Panc1 (cell line): ENCODE measurements at regions of chr3 and their contacts with region 1.

Region 1: DNA sequence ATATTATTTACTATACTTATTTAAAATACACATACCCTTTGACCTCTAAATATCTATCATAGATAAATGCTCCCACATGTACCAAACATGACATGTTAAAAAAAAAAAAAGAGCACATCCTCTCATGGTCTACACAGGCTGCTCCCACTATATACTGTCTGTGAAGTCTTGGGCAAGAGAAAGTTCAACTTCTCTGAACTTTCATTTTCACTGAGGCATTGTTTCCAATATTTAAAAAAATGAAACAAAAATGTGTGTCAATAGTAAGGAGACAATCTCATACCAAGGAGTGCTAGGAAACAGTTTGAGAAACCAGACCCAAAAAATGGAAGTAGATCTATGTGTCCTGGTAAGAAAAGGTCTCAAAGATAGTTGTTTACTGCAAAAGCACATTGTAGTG is 29.3 kb downstream of the SLC4A7 start:
- DNase-seq: no peak
- ATAC-seq: no peak
- H3K4me3 ChIP-seq: no peak overlapping the region
- H3K27ac ChIP-seq: peak overlapping the region; percentile 59; the same call in 1 of the 2 replicates
- H3K4me1 ChIP-seq: peaks cover 82% of the 10 kb centered on the region
- H3K27me3 ChIP-seq: no peaks in the 10 kb centered on the region
- CTCF ChIP-seq: no peak

Region 2: DNA sequence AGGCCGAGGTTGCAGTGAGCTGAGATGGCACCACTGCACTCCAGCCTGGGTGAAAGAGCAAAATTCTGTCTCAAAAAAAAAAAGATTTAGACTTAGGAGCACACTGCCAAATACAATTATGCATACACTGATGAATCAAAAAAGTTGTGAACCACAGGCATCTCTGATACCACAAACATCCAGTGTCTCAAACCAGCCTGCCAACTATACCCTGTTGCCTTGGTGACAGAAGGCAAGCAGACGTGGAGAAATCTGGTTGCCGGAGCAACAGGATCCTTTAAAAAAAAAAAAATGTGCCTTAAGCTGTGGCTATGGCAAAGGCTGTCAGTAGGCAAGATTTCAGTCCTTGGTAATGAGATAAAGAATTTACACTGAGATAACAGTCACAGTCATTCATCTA is 288.0 kb before region 1 on chr3:
- CTCF ChIA-PET with region 1: no interaction called
- POLR2A ChIA-PET with region 1: no interaction called
- in situ Hi-C with region 1: no loop called
- intact Hi-C with region 1: no loop called
- DNase-seq: no peak
- ATAC-seq: no peak
- H3K4me3 ChIP-seq: no peak overlapping the region
- H3K27ac ChIP-seq: no peak overlapping the region
- H3K4me1 ChIP-seq: no peaks in the 10 kb centered on the region
- H3K27me3 ChIP-seq: no peaks in the 10 kb centered on the region
- CTCF ChIP-seq: no peak

Region 3: DNA sequence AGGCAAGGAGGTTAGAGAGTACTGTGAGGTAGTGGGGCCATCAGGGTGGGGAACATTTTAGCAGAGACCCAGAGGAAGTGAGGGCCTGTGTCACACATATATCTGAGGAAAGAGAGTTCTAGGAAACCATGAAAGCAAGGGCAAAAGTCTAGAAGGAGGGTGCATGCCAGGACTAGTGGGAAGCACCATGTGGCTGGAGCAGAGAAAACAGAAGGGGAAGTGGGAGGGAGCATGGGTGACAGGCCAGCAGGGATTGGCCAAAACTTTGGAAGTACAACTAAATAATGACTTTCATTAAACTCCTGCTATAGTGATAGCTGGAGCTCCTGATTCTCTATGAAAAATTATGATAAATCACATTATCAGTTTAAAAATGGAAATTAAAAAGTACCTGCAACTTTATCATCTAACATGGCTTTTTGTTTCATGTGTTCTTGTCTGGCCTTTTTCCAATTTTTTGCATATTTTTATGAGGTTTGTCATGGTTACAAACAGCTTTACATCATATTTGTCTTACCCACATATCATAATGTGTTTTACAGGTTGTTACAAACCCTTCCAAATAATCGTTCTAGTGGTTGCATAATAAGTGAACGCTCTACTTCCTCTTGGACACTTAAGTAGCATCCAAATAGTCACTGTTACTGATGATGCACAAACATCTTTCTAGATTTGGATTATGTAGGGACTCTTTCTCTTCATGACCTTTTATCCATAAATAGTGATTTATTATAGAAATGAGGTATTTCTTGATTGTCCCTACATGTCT is 254.0 kb before region 1 on chr3:
- CTCF ChIA-PET with region 1: no interaction called
- POLR2A ChIA-PET with region 1: no interaction called
- in situ Hi-C with region 1: no loop called
- intact Hi-C with region 1: no loop called
- DNase-seq: no peak
- ATAC-seq: no peak
- H3K4me3 ChIP-seq: no peak overlapping the region
- H3K27ac ChIP-seq: no peak overlapping the region
- H3K4me1 ChIP-seq: no peaks in the 10 kb centered on the region
- H3K27me3 ChIP-seq: no peaks in the 10 kb centered on the region
- CTCF ChIP-seq: no peak

Region 4: GRCh38 chr3:27415202-27415601 is 39.7 kb before region 1 on chr3:
- CTCF ChIA-PET with region 1: no interaction called
- POLR2A ChIA-PET with region 1: interaction called, 10 read pairs
- in situ Hi-C with region 1: no loop called
- intact Hi-C with region 1: no loop called
- DNase-seq: no peak
- ATAC-seq: no peak
- H3K4me3 ChIP-seq: no peak overlapping the region
- H3K27ac ChIP-seq: no peak overlapping the region
- H3K4me1 ChIP-seq: no peaks in the 10 kb centered on the region; the same call in 1 of the 2 replicates
- H3K27me3 ChIP-seq: no peaks in the 10 kb centered on the region
- CTCF ChIP-seq: no peak

Region 5: GRCh38 chr3:27484015-27484844 is 29.3 kb after region 1 on chr3 and contains the start of gene SLC4A7:
- CTCF ChIA-PET with region 1: no interaction called
- POLR2A ChIA-PET with region 1: no interaction called
- in situ Hi-C with region 1: no loop called
- intact Hi-C with region 1: no loop called
- DNase-seq: peak; percentile 57
- ATAC-seq: peak; percentile 92
- H3K4me3 ChIP-seq: peak within 1 kb of the TSS; percentile 78 to 86
- H3K27ac ChIP-seq: peak within 1 kb of the TSS; percentile 95
- H3K4me1 ChIP-seq: peaks cover 14% of the 10 kb centered on the region
- H3K27me3 ChIP-seq: no peaks in the 10 kb centered on the region
- CTCF ChIP-seq: no peak
- total RNA-seq, gene SLC4A7: 99.4 TPM

Region 6: GRCh38 chr3:27521179-27521871 is 66.4 kb after region 1 on chr3:
- CTCF ChIA-PET with region 1: no interaction called
- POLR2A ChIA-PET with region 1: interaction called, 10 read pairs
- in situ Hi-C with region 1: no loop called
- intact Hi-C with region 1: no loop called
- DNase-seq: peak; percentile 86
- ATAC-seq: peak; percentile 69
- H3K4me3 ChIP-seq: no peak overlapping the region
- H3K27ac ChIP-seq: peak overlapping the region; percentile 99
- H3K4me1 ChIP-seq: peaks cover 36% of the 10 kb centered on the region
- H3K27me3 ChIP-seq: no peaks in the 10 kb centered on the region
- CTCF ChIP-seq: no peak

Region 7: DNA sequence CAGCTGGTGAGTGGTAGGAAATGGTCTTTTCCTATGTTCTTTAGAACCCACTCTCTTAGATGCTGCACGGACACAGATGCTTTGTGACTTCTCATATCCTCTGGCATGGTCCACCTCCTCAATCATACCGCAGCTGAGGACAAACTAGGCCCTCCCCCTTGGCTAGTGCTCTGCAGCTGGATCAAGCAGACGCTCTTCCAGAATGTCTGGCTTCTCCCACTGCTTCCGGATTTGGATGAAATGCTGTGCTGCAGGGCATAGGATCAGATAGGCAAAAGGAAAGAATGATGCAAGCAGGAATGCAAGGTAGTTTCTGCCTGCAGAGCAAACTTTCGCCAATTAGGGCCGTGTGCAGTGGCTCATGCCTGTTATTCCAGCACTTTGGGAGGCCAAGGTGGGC is 104.9 kb after region 1 on chr3:
- CTCF ChIA-PET with region 1: no interaction called
- POLR2A ChIA-PET with region 1: no interaction called
- in situ Hi-C with region 1: no loop called
- intact Hi-C with region 1: no loop called
- DNase-seq: no peak
- ATAC-seq: peak; percentile 82; the same call in 1 of the 2 replicates
- H3K4me3 ChIP-seq: no peak overlapping the region
- H3K27ac ChIP-seq: peak overlapping the region; percentile 58
- H3K4me1 ChIP-seq: no peaks in the 10 kb centered on the region
- H3K27me3 ChIP-seq: no peaks in the 10 kb centered on the region
- CTCF ChIP-seq: no peak